Endothelial cell of umbilical vein (primary cell): ENCODE measurements at regions of chr2 and their contacts with region 1.

Region 1: GRCh38 chr2:84905181-84906107 is at the start of gene TMSB10:
- DNase-seq: peak; percentile 88
- H3K4me3 ChIP-seq: peak within 1 kb of the TSS; percentile 96 to 100 (median 99)
- H3K27ac ChIP-seq: peak within 1 kb of the TSS; percentile 91
- H3K4me1 ChIP-seq: peaks cover 7% of the 10 kb centered on the region
- H3K27me3 ChIP-seq: no peaks in the 10 kb centered on the region
- CTCF ChIP-seq: peak in 1 of 2 donors; percentile 15
- POLR2A ChIP-seq: peak; percentile 99
- total RNA-seq, gene TMSB10: 4,007 and 4,015 TPM in 2 replicates

Region 2: DNA sequence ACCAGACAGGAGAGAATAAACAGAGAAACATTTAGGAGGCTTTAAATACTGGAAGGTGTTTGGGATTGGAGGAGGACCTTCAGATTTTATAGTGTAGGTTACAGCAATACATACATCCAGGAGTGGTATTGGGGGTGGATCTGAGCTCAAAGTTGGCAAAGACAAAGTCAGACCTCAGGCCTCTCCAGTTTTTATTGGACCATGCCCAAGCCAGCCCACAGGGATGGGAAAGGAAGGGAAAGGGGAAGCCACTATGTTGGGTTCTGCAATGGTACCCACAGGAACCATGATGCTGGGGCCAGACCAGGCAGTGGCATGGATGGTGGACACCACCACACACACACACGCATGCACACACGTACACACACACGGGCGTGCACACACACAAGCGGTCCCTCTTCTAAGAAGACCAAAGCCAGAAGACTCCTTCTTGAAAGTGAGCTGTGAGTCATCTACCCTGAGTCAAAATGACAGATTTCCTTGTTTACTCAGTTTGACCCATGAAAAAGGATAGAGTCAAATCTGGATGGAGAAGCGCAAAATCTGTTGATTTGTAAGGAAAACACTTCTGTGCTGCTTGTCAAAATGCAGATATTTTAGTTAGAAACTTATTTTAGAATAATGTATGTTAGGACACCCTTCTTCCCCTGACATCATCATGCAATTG is 112.5 kb before region 1 on chr2:
- CTCF ChIA-PET with region 1: no interaction called
- POLR2A ChIA-PET with region 1: no interaction called
- dilution Hi-C with region 1: no loop called
- intact Hi-C with region 1: no loop called
- DNase-seq: no peak
- H3K4me3 ChIP-seq: no peak overlapping the region
- H3K27ac ChIP-seq: no peak overlapping the region
- H3K4me1 ChIP-seq: no peaks in the 10 kb centered on the region
- H3K27me3 ChIP-seq: peaks cover 0 to under 1% of the 10 kb centered on the region in 2 experiments
- CTCF ChIP-seq: no peak
- POLR2A ChIP-seq: no peak

Region 3: GRCh38 chr2:84881581-84882414 is 23.6 kb before region 1 on chr2:
- CTCF ChIA-PET with region 1: interaction called, 31 read pairs
- POLR2A ChIA-PET with region 1: interaction called, 4 read pairs
- dilution Hi-C with region 1: no loop called
- intact Hi-C with region 1: loop called (anchors 1 kb)
- DNase-seq: peak; percentile 82
- H3K4me3 ChIP-seq: peak overlapping the region; percentile 3 to 69 (median 15)
- H3K27ac ChIP-seq: no peak overlapping the region
- H3K4me1 ChIP-seq: peaks cover 16% of the 10 kb centered on the region
- H3K27me3 ChIP-seq: peaks cover 41% of the 10 kb centered on the region in 2 experiments
- CTCF ChIP-seq: peak; percentile 72 to 76
- POLR2A ChIP-seq: no peak

Region 4: GRCh38 chr2:84919885-84920580 is 14.6 kb after region 1 on chr2:
- CTCF ChIA-PET with region 1: interaction called, 61 read pairs
- POLR2A ChIA-PET with region 1: interaction called, 44 read pairs
- dilution Hi-C with region 1: no loop called
- intact Hi-C with region 1: loop called (anchors 1 kb)
- DNase-seq: peak; percentile 91
- H3K4me3 ChIP-seq: peak overlapping the region in 1 of 3 experiments; percentile 39
- H3K27ac ChIP-seq: peak overlapping the region; percentile 99
- H3K4me1 ChIP-seq: peaks cover 29% of the 10 kb centered on the region
- H3K27me3 ChIP-seq: no peaks in the 10 kb centered on the region
- CTCF ChIP-seq: no peak
- POLR2A ChIP-seq: peak; percentile 45

Region 5: GRCh38 chr2:84958135-84959044 is 52.9 kb after region 1 on chr2:
- CTCF ChIA-PET with region 1: no interaction called
- POLR2A ChIA-PET with region 1: interaction called, 3 read pairs
- dilution Hi-C with region 1: no loop called
- intact Hi-C with region 1: loop called (anchors 2 kb)
- DNase-seq: peak; percentile 87
- H3K4me3 ChIP-seq: no peak overlapping the region
- H3K27ac ChIP-seq: peak overlapping the region; percentile 63
- H3K4me1 ChIP-seq: peaks cover 28% of the 10 kb centered on the region
- H3K27me3 ChIP-seq: no peaks in the 10 kb centered on the region
- CTCF ChIP-seq: no peak
- POLR2A ChIP-seq: no peak

Region 6: DNA sequence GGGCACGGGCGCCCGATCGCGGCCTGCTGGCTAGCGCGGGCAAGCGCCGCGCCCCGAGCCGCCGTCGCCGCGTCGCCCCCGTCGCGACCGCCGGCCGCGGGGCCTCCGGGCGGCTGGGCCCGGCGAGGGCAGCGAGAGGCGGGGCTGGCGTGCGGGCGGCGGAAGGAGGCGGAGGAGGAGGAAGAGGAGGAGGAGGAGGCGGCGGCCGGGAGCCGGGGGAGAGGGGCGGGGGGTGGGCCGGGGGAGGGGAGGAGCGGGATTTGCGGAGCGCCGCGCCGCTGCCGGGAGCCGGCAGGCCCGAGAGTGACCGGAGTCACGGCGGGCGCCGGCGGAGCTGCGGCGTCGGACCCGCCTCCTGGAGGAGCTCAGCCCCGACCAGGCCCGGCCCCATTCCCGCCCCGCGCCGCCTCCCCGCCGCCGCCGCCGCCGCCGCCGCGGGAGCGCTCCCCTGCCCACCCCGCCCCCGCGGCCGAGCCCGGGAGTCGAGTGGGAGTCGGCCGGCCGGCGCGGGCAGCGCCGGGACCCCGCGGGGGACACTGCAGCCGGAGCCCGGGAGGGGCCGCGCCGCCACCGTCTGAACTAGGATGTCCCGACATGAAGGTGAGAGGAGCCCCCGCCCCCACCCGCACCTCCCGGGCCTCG is 65.5 kb after region 1 on chr2 and contains the start of gene KCMF1:
- CTCF ChIA-PET with region 1: no interaction called
- POLR2A ChIA-PET with region 1: interaction called, 3 read pairs
- dilution Hi-C with region 1: no loop called
- intact Hi-C with region 1: loop called (anchors 5 kb)
- DNase-seq: peak; percentile 30
- H3K4me3 ChIP-seq: peak within 1 kb of the TSS; percentile 92 to 98 (median 97)
- H3K27ac ChIP-seq: peak within 1 kb of the TSS; percentile 96
- H3K4me1 ChIP-seq: peaks cover 18% of the 10 kb centered on the region
- H3K27me3 ChIP-seq: no peaks in the 10 kb centered on the region
- CTCF ChIP-seq: no peak
- POLR2A ChIP-seq: no peak
- total RNA-seq, gene KCMF1: 75.9 and 78.4 TPM in 2 replicates

Region 7: GRCh38 chr2:85132834-85133637 is 227.6 kb after region 1 on chr2 and contains the start of gene TCF7L1:
- CTCF ChIA-PET with region 1: no interaction called
- POLR2A ChIA-PET with region 1: no interaction called
- dilution Hi-C with region 1: no loop called
- intact Hi-C with region 1: no loop called
- DNase-seq: peak; percentile 91
- H3K4me3 ChIP-seq: peak within 1 kb of the TSS; percentile 74 to 95 (median 79)
- H3K27ac ChIP-seq: no peak within 1 kb of the TSS
- H3K4me1 ChIP-seq: peaks cover 13% of the 10 kb centered on the region
- H3K27me3 ChIP-seq: peaks cover 3 to 6% of the 10 kb centered on the region in 2 experiments
- CTCF ChIP-seq: peak; percentile 82 to 91
- POLR2A ChIP-seq: peak; percentile 36
- total RNA-seq, gene TCF7L1: 13.2 and 17.4 TPM in 2 replicates